ENCODE measurements at regions of chr19 and their contacts with region 1.

Region 1: GRCh38 chr19:17496337-17496997 is 15.0 kb upstream of the PGLS start:
- DNase-seq: peak; percentile 90
- ATAC-seq: peak; percentile 97
- H3K4me3 Mint-ChIP-seq: peak overlapping the region; percentile 20
- H3K27ac Mint-ChIP-seq: peak overlapping the region; percentile 32
- H3K4me1 Mint-ChIP-seq: peaks cover 24% of the 10 kb centered on the region
- H3K27me3 Mint-ChIP-seq: no peaks in the 10 kb centered on the region

Region 2: GRCh38 chr19:17447704-17448130 is 48.8 kb before region 1 on chr19:
- CTCF ChIA-PET with region 1: no interaction called
- DNase-seq: no peak
- ATAC-seq: no peak
- H3K4me3 Mint-ChIP-seq: no peak overlapping the region
- H3K27ac Mint-ChIP-seq: no peak overlapping the region
- H3K4me1 Mint-ChIP-seq: peaks cover 22% of the 10 kb centered on the region
- H3K27me3 Mint-ChIP-seq: peaks cover 17% of the 10 kb centered on the region

Region 3: DNA sequence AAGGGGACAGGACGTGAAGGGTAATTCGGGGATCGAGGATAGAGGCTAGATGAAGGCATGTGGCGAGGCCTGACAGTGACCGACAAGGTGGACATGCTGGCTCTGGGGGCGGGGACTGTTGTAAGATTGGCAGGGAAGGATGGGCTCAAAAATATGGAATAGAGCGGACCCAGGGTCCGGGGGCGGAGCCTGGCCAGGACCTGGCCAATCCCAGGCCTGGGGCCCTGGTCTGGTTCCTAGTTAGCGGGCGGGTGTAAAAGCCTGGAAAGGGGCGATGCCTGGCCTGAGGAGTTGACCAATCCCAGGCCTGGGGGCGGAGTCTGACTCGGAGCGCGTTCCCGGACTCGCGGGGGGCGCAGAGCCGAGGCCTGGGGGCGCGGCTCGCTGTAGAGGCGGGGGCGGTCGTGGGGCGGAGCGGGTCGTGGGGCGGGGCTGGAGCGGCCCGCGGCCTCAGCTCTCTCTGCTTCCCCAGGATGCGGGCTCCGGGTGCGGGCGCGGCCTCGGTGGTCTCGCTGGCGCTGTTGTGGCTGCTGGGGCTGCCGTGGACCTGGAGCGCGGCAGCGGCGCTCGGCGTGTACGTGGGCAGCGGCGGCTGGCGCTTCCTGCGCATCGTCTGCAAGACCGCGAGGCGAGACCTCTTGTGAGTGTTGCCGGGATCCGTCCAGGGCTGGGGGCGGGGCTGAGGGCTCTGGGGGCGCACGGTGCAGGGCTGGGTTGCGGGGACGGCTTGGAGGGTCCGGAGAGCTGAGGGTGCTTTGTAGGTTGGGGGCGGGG is 26.2 kb before region 1 on chr19 and contains the start of gene SLC27A1:
- CTCF ChIA-PET with region 1: interaction called, 40 read pairs
- DNase-seq: peak; percentile 94
- ATAC-seq: peak; percentile 90
- H3K4me3 Mint-ChIP-seq: peak within 1 kb of the TSS; percentile 90
- H3K27ac Mint-ChIP-seq: peak within 1 kb of the TSS; percentile 88
- H3K4me1 Mint-ChIP-seq: peaks cover 29% of the 10 kb centered on the region
- H3K27me3 Mint-ChIP-seq: peaks cover 11% of the 10 kb centered on the region
- total RNA-seq, gene SLC27A1: 1.5 to 2.1 TPM

Region 4: DNA sequence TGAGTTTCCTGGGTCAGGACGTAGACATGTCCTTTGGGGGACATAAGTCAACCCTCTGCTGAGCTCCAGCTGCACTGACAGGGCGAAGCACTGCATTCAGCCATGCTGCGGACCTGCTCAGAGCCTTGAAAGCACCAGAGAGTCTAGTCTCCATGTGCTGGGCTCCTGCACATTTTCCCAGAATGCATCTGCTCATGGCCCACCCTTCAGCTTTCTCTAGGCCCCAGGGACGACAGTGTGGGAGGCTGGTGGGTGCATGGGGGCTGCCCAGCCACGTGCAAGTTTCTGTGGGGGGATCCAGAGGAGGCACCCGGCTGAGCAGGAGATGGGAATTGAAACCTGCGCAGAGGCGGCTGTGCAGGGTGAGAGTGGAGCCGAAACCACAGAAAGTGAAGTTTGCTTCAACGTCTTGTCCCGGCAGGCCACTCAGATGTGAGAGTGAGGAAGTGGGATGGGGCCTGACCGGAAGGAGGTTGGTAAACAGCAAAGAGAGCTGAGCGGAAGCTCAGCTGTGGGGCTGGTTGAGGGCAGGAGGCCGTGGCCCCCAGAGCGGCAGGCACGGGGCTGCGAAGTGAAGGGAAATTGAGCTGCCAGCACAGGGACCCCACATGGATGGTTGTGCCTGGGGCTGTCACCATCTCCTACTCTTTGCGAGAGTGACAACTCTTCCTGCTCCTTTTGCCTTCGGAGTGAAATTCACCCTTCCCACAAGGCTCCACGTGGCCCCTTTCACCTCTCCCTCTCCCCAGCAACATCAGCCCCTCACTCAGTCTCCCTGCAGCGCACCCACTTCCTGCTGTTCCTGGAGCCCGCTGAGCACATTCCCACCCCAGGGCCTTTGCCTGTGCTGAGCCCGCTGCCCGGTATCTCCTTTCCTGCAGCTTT is 26.8 kb after region 1 on chr19:
- CTCF ChIA-PET with region 1: interaction called, 17 read pairs
- DNase-seq: peak; percentile 90
- ATAC-seq: peak; percentile 93
- H3K4me3 Mint-ChIP-seq: peak overlapping the region; percentile 37
- H3K27ac Mint-ChIP-seq: peak overlapping the region; percentile 72
- H3K4me1 Mint-ChIP-seq: peaks cover 28% of the 10 kb centered on the region
- H3K27me3 Mint-ChIP-seq: peaks cover 7% of the 10 kb centered on the region

Region 5: DNA sequence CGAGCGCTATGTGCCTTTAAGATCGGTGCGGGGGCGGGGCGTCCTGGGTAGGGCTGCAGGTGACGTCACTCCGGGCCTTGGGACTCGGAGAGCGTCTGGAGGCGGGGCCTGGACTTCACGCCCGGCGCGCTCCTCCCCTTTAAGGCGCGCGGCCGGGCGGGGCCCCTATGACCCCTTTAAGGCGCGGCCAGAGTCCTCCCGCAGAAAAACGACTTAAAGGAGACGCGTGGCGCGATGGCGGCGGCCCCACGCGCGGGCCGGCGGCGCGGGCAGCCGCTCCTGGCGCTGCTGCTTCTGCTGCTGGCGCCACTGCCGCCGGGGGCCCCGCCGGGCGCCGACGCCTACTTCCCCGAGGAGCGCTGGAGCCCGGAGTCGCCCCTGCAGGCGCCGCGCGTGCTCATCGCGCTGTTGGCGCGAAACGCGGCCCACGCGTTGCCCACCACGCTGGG is 59.0 kb after region 1 on chr19 and contains the start of gene COLGALT1:
- CTCF ChIA-PET with region 1: interaction called, 12 read pairs
- DNase-seq: peak; percentile 99
- ATAC-seq: peak; percentile 97
- H3K4me3 Mint-ChIP-seq: peak within 1 kb of the TSS; percentile 78
- H3K27ac Mint-ChIP-seq: peak within 1 kb of the TSS; percentile 77
- H3K4me1 Mint-ChIP-seq: peaks cover 12% of the 10 kb centered on the region
- H3K27me3 Mint-ChIP-seq: no peaks in the 10 kb centered on the region
- total RNA-seq, gene COLGALT1: 52.2 to 65.2 TPM

Region 6: DNA sequence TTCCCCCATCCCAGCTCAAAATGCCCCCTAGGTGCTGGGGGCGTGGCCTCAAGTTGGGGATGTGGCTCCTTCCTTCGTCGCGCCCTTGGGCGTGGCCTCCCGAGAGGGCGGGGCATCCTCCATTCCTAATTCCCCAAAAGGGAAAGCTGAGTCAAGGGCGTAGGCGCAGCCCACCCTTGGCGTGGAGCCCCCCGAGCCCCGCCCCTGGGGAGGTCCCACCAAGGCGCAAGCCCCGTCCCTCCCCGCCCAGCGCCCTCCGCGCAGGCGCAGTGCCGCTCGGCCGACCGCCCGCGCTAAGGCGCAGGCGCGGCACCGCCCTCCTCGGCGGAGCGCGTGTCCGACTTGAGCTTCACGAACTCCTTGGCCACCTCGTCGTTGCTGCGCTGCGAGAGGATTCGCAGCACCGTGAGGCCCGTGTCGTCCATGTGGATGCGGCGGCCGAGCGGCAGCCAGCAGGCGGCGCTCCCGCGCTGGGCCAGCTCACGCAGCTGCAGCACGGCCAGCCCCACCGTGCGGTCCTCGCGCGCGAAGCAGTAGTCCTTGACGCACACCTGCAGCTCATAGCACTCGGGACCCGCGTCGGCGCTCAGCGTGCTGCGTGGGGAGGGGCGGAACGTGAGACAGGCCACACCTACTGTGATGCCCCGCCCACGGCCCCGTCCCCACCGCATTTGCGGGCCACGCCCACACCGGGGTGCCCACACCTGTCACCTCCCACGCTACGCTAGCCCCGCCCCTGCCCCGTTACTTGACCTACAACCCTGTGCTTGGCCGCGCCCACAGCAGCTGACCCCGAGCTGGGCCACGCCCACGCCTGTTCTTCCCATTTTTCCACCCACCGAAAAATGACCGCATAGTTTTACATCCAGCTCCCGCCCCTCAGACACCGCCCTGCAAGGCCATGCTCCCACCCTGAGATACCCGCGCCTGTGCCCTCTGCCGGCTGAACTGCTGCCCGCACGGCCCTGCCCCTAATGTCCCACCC is 109.6 kb after region 1 on chr19:
- CTCF ChIA-PET with region 1: interaction called, 12 read pairs
- DNase-seq: peak; percentile 87
- ATAC-seq: peak; percentile 89
- H3K4me3 Mint-ChIP-seq: peak overlapping the region; percentile 63
- H3K27ac Mint-ChIP-seq: peak overlapping the region; percentile 9
- H3K4me1 Mint-ChIP-seq: peaks cover 7% of the 10 kb centered on the region
- H3K27me3 Mint-ChIP-seq: peaks cover 34% of the 10 kb centered on the region

Measured in activated CD8-positive, alpha-beta memory T cell treated with anti-CD3 and anti-CD28 coated beads, Interleukin-2, amount 10 ng/mL, durations not matched to agents 7 days and 5 days (primary cell).